ENCODE measurements at regions of chr2 and their contacts with region 1.

Region 1: DNA sequence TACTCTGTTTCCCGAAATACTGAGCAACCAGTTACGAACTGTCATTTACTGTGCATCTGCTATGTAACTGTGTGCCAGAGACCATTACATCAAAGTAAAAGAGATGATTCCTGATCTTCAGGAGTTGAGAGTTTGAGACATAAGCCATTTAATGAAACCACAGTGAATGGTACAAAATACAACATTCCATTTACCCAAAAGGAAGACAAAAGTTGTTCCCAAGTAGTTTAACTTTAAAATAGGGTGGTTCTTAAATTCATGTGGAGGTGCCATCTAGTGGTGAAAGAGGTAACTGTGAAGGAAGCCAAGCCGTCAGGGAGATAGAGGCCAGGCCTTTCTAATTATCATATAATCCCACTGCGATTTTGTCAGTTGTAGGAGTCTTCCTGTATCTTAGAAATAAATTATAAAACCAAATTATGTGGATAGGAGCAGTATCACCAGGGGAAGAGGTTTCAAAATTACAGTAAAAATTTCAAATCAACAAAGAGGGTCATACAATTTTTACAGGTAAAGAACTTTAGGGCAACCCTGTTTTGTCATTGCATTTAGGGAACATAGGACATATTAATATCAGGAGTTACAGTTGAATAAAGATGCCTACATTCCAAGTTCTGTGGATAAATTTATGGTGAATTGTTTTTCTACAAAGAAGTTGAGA is 67.7 kb downstream of the EPAS1 start:
- DNase-seq: no peak
- H3K4me3 ChIP-seq: no peak overlapping the region
- H3K27ac ChIP-seq: no peak overlapping the region
- H3K4me1 ChIP-seq: peaks cover 0 to 22% (median 6%) of the 10 kb centered on the region in 4 donors
- H3K27me3 ChIP-seq: no peaks in the 10 kb centered on the region
- CTCF ChIP-seq: peak; percentile 83 to 86 (median 86)
- EP300 ChIP-seq: no peak
- POLR2A ChIP-seq: no peak

Region 2: GRCh38 chr2:45993476-45993991 is 371.4 kb before region 1 on chr2:
- intact Hi-C with region 1: loop called (anchors 5 kb)
- DNase-seq: peak; percentile 92
- H3K4me3 ChIP-seq: no peak overlapping the region
- H3K27ac ChIP-seq: peak overlapping the region; percentile 59 to 76 (median 66)
- H3K4me1 ChIP-seq: peaks cover 25 to 42% (median 40%) of the 10 kb centered on the region in 4 donors
- H3K27me3 ChIP-seq: no peaks in the 10 kb centered on the region
- CTCF ChIP-seq: peak; percentile 73 to 86 (median 79)
- EP300 ChIP-seq: no peak
- POLR2A ChIP-seq: no peak

Region 3: GRCh38 chr2:46062637-46063412 is 302.1 kb before region 1 on chr2:
- intact Hi-C with region 1: loop called (anchors 5 kb)
- DNase-seq: peak; percentile 96
- H3K4me3 ChIP-seq: no peak overlapping the region
- H3K27ac ChIP-seq: peak overlapping the region in 3 of 4 donors; percentile 42 to 50 (median 50)
- H3K4me1 ChIP-seq: peaks cover 19 to 21% (median 20%) of the 10 kb centered on the region in 4 donors
- H3K27me3 ChIP-seq: no peaks in the 10 kb centered on the region
- CTCF ChIP-seq: peak; percentile 86 to 88 (median 88)
- EP300 ChIP-seq: no peak
- POLR2A ChIP-seq: no peak

Region 4: GRCh38 chr2:46296840-46297545 is 67.9 kb before region 1 on chr2 and contains the start of gene EPAS1:
- intact Hi-C with region 1: loop called (anchors 2 kb)
- DNase-seq: peak; percentile 97
- H3K4me3 ChIP-seq: peak within 1 kb of the TSS; percentile 66 to 88 (median 80)
- H3K27ac ChIP-seq: peak within 1 kb of the TSS; percentile 90 to 94 (median 92)
- H3K4me1 ChIP-seq: peaks cover 4 to 42% (median 34%) of the 10 kb centered on the region in 4 donors
- H3K27me3 ChIP-seq: no peaks in the 10 kb centered on the region
- CTCF ChIP-seq: no peak
- EP300 ChIP-seq: no peak
- POLR2A ChIP-seq: peak; percentile 75
- total RNA-seq, gene EPAS1: 113 to 225 (median 183) TPM

Region 5: GRCh38 chr2:46327632-46328031 is 37.3 kb before region 1 on chr2:
- intact Hi-C with region 1: no loop called
- DNase-seq: no peak
- H3K4me3 ChIP-seq: no peak overlapping the region
- H3K27ac ChIP-seq: peak overlapping the region in 1 of 4 donors; percentile 22
- H3K4me1 ChIP-seq: peaks cover 64 to 94% (median 71%) of the 10 kb centered on the region in 4 donors
- H3K27me3 ChIP-seq: no peaks in the 10 kb centered on the region
- CTCF ChIP-seq: no peak
- EP300 ChIP-seq: no peak
- POLR2A ChIP-seq: no peak

Region 6: GRCh38 chr2:46394649-46395510 is 30.0 kb after region 1 on chr2:
- intact Hi-C with region 1: no loop called
- DNase-seq: no peak
- H3K4me3 ChIP-seq: no peak overlapping the region
- H3K27ac ChIP-seq: no peak overlapping the region
- H3K4me1 ChIP-seq: no peaks in the 10 kb centered on the region
- H3K27me3 ChIP-seq: no peaks in the 10 kb centered on the region
- CTCF ChIP-seq: no peak
- EP300 ChIP-seq: no peak
- POLR2A ChIP-seq: no peak

Region 7: GRCh38 chr2:46451131-46451711 is 86.3 kb after region 1 on chr2:
- intact Hi-C with region 1: loop called (anchors 10 kb)
- DNase-seq: peak; percentile 89
- H3K4me3 ChIP-seq: no peak overlapping the region
- H3K27ac ChIP-seq: peak overlapping the region; percentile 41 to 59 (median 48)
- H3K4me1 ChIP-seq: peaks cover 0 to 18% (median 11%) of the 10 kb centered on the region in 4 donors
- H3K27me3 ChIP-seq: no peaks in the 10 kb centered on the region
- CTCF ChIP-seq: no peak
- EP300 ChIP-seq: no peak
- POLR2A ChIP-seq: no peak